ENCODE measurements at regions of chr21 and their contacts with region 1.

Region 1: DNA sequence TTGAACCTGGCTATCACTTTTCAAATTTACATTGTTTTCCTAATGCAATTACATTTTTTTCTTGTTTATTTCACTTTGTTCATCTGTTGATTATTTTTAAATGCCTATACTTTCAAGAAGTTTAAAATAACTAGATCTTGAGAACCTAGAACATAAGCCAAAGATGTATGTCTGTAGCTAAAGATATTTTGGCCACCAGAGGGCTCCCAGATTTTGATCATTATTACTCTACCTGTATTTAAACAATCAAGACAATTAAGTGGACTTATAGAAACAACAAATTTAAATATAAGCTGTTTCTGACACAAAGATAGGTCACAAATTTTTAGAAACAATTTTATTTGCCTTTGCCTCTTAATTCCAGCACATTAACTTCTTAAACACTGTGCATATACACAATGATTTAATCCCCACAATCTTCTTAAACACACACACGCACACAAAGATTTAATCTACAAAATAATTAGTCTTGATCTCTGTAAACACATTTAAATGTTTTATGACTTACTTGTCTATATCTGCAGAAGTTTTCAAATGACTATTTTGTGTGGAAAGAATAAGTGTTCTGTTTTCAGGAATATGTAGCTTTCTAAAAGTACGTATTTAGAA is 380.0 kb downstream of the DSCAM start:
- DNase-seq: no peak
- ATAC-seq: no peak
- H3K4me3 ChIP-seq: no peak overlapping the region
- H3K4me3 Mint-ChIP-seq: no peak overlapping the region
- H3K27ac ChIP-seq: no peak overlapping the region
- H3K27ac Mint-ChIP-seq: no peak overlapping the region
- H3K4me1 ChIP-seq: no peaks in the 10 kb centered on the region
- H3K4me1 Mint-ChIP-seq: no peaks in the 10 kb centered on the region
- H3K27me3 ChIP-seq: no peaks in the 10 kb centered on the region
- H3K27me3 Mint-ChIP-seq: no peaks in the 10 kb centered on the region
- CTCF ChIP-seq: no peak

Region 2: GRCh38 chr21:40227096-40227495 is 239.9 kb before region 1 on chr21:
- CTCF ChIA-PET with region 1: no interaction called
- POLR2A ChIA-PET with region 1: no interaction called
- intact Hi-C with region 1: no loop called
- DNase-seq: no peak
- ATAC-seq: no peak
- H3K4me3 ChIP-seq: no peak overlapping the region
- H3K4me3 Mint-ChIP-seq: no peak overlapping the region
- H3K27ac ChIP-seq: no peak overlapping the region
- H3K27ac Mint-ChIP-seq: no peak overlapping the region
- H3K4me1 ChIP-seq: no peaks in the 10 kb centered on the region
- H3K4me1 Mint-ChIP-seq: no peaks in the 10 kb centered on the region
- H3K27me3 ChIP-seq: no peaks in the 10 kb centered on the region
- H3K27me3 Mint-ChIP-seq: no peaks in the 10 kb centered on the region
- CTCF ChIP-seq: no peak

Region 3: DNA sequence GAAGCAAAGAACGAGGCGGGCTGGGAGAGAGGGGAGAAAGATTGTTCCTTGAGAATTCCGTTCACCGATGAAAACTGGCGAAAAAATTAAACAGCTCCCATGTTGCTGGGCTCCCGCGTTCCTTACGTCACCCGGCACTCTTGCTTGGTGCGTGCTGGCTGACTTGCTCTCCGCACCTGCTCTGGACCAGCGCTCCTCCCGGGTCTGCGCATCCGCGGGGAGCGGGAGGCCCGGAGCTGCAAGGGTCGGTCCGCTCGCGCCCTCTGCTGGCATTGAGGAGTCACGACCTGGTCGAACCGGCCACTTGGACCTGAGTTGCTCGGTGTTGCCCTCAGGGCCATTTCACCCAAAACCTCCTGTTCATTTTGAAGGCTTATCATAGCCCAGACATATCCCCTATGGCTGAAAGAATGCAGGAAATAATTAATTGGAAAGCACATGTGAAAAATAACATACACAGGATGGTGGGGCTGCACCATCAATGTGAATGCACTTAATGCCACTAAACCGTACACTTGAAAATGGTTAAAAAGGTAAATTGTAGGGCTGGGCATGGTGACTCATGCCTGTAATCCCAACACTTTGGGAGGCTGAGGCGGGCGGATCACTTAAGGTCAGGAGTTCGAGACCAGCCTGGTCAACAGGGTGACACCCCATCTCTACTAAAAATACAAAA is 602.1 kb after region 1 on chr21:
- CTCF ChIA-PET with region 1: no interaction called
- POLR2A ChIA-PET with region 1: no interaction called
- intact Hi-C with region 1: loop called (anchors 5 kb)
- DNase-seq: peak; percentile 66
- ATAC-seq: peak; percentile 65
- H3K4me3 ChIP-seq: peak overlapping the region in 1 of 5 experiments; percentile 23
- H3K4me3 Mint-ChIP-seq: peak overlapping the region; percentile 48
- H3K27ac ChIP-seq: no peak overlapping the region
- H3K27ac Mint-ChIP-seq: no peak overlapping the region
- H3K4me1 ChIP-seq: peaks cover 8% of the 10 kb centered on the region in 2 donors
- H3K4me1 Mint-ChIP-seq: peaks cover 10% of the 10 kb centered on the region
- H3K27me3 ChIP-seq: peaks cover 0 to 20% (median 9%) of the 10 kb centered on the region in 4 experiments
- H3K27me3 Mint-ChIP-seq: peaks cover 33% of the 10 kb centered on the region
- CTCF ChIP-seq: peak; percentile 78

Region 4: GRCh38 chr21:41133896-41134522 is 667.0 kb after region 1 on chr21:
- CTCF ChIA-PET with region 1: interaction called, 5 read pairs
- POLR2A ChIA-PET with region 1: no interaction called
- intact Hi-C with region 1: loop called (anchors 10 kb)
- DNase-seq: peak; percentile 17
- ATAC-seq: no peak
- H3K4me3 ChIP-seq: no peak overlapping the region
- H3K4me3 Mint-ChIP-seq: no peak overlapping the region
- H3K27ac ChIP-seq: no peak overlapping the region
- H3K27ac Mint-ChIP-seq: no peak overlapping the region
- H3K4me1 ChIP-seq: no peaks in the 10 kb centered on the region
- H3K4me1 Mint-ChIP-seq: no peaks in the 10 kb centered on the region
- H3K27me3 ChIP-seq: peaks cover 0 to 4% (median 2%) of the 10 kb centered on the region in 4 experiments
- H3K27me3 Mint-ChIP-seq: peaks cover 32% of the 10 kb centered on the region
- CTCF ChIP-seq: peak; percentile 20